PC-3 (cell line): ENCODE measurements at regions of chr4 and their contacts with region 1.

Region 1: GRCh38 chr4:73844352-73844751 is 7.9 kb downstream of the CXCL6 start:
- DNase-seq: peak; percentile 95
- ATAC-seq: peak; percentile 82
- H3K4me3 ChIP-seq: peak overlapping the region; percentile 24
- H3K27ac ChIP-seq: peak overlapping the region; percentile 85
- H3K4me1 ChIP-seq: peaks cover 53% of the 10 kb centered on the region
- H3K27me3 ChIP-seq: no peaks in the 10 kb centered on the region
- CTCF ChIP-seq: no peak

Region 2: DNA sequence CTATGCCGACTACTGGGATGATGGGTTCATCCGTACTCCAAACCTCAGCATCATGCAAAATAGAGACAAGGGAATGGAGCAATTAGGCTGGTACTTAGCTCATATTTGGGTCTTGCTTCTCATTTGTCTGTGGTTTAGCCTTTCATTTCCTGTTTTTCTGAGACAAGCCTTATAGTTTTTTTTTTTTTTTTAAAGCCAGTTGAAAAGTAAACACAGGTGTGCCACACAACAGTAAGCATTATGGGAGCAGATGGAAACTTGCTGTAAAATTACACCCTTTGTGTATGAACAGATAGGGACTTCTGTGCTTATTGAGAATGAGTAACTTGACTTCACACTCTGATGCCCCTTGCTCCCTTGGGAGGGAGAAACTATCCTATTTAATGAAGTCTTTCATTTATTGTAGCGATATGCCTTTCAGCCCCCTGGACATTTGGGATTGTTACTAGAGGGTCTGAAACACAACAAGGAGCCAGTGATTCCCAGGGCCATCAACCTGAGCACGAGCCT is 237.8 kb before region 1 on chr4:
- CTCF ChIA-PET with region 1: no interaction called
- POLR2A ChIA-PET with region 1: no interaction called
- intact Hi-C with region 1: loop called (anchors 5 kb)
- DNase-seq: peak; percentile 64
- ATAC-seq: peak; percentile 20; the same call in 1 of the 2 replicates
- H3K4me3 ChIP-seq: no peak overlapping the region
- H3K27ac ChIP-seq: peak overlapping the region; percentile 51
- H3K4me1 ChIP-seq: peaks cover 55% of the 10 kb centered on the region
- H3K27me3 ChIP-seq: no peaks in the 10 kb centered on the region
- CTCF ChIP-seq: no peak

Region 3: DNA sequence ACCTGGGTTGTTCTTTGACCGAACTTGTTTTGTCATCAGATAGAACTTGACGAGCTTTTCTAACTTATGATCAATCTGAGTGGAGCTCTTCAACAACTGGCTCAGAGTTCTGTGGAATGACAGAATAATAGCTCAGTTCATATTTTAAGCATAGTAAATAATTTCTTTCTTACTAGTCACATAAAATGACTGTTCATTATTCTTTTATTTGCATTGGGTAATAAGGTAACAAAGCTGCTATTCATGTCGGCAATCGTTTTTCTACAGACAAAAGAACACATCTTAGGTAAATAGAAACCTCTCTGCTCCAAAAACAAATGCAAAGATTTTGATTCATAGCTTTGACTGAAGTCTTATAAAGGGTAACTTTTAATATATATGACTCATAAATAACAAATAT is 161.3 kb before region 1 on chr4:
- CTCF ChIA-PET with region 1: no interaction called
- POLR2A ChIA-PET with region 1: interaction called, 3 read pairs
- intact Hi-C with region 1: loop called (anchors 2 kb)
- DNase-seq: peak; percentile 98
- ATAC-seq: peak; percentile 75
- H3K4me3 ChIP-seq: no peak overlapping the region
- H3K27ac ChIP-seq: peak overlapping the region; percentile 96
- H3K4me1 ChIP-seq: peaks cover 71% of the 10 kb centered on the region
- H3K27me3 ChIP-seq: no peaks in the 10 kb centered on the region
- CTCF ChIP-seq: no peak

Region 4: GRCh38 chr4:73864365-73864764 is 20.0 kb after region 1 on chr4:
- CTCF ChIA-PET with region 1: interaction called, 10 read pairs
- POLR2A ChIA-PET with region 1: interaction called, 3 read pairs
- intact Hi-C with region 1: loop called (anchors 2 kb)
- DNase-seq: peak; percentile 73
- ATAC-seq: peak; percentile 11; the same call in 1 of the 2 replicates
- H3K4me3 ChIP-seq: peak overlapping the region; percentile 6; the same call in 1 of the 2 replicates
- H3K27ac ChIP-seq: peak overlapping the region; percentile 82
- H3K4me1 ChIP-seq: peaks cover 70% of the 10 kb centered on the region
- H3K27me3 ChIP-seq: no peaks in the 10 kb centered on the region
- CTCF ChIP-seq: peak; percentile 93

Region 5: GRCh38 chr4:73891739-73892405 is 47.5 kb after region 1 on chr4:
- CTCF ChIA-PET with region 1: no interaction called
- POLR2A ChIA-PET with region 1: no interaction called
- intact Hi-C with region 1: no loop called
- DNase-seq: no peak
- ATAC-seq: no peak
- H3K4me3 ChIP-seq: no peak overlapping the region
- H3K27ac ChIP-seq: no peak overlapping the region
- H3K4me1 ChIP-seq: peaks cover 28% of the 10 kb centered on the region
- H3K27me3 ChIP-seq: no peaks in the 10 kb centered on the region
- CTCF ChIP-seq: no peak